B cell (primary cell): ENCODE measurements at regions of chr6 and their contacts with region 1.

Region 1: GRCh38 chr6:16761471-16762267 is 409 bp upstream of the ATXN1 start:
- DNase-seq: peak; percentile 85
- ATAC-seq: peak; percentile 52
- H3K4me3 ChIP-seq: peak overlapping the region; percentile 56 to 85 (median 80)
- H3K4me3 Mint-ChIP-seq: peak overlapping the region; percentile 91
- H3K27ac ChIP-seq: peak overlapping the region; percentile 79 to 89
- H3K27ac Mint-ChIP-seq: peak overlapping the region; percentile 93
- H3K4me1 ChIP-seq: peaks cover 13 to 29% of the 10 kb centered on the region in 2 donors
- H3K4me1 Mint-ChIP-seq: peaks cover 38% of the 10 kb centered on the region
- H3K27me3 ChIP-seq: peaks cover 0 to 23% (median 5%) of the 10 kb centered on the region in 4 experiments
- H3K27me3 Mint-ChIP-seq: no peaks in the 10 kb centered on the region
- CTCF ChIP-seq: peak; percentile 18

Region 2: DNA sequence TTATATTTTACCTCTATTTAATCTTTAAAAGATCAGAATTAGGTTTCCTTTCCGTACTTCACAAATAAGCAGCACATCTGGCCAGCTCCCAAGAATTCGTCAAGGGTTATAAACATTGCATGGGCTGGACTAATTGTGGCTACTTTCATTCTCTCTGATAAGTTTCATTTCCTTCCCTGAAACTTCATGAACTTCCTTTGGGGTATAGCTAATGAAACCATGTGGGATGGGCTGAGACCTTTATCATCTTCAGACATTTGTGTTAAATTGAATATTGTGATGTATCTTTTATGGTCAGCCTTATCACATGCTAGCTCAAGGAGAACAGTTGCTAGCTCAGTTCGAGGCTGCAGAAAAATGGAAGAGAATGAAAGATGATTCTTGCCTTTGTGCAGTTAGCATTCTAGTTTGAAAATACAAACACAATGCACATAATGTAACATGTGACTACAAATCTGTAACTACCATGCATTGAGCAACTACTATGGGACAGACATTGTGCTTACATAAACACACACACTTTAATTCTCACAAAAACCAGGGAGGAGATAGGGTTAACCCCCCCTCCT is 525.0 kb before region 1 on chr6:
- CTCF ChIA-PET with region 1: no interaction called
- POLR2A ChIA-PET with region 1: no interaction called
- intact Hi-C with region 1: loop called (anchors 2 kb)
- DNase-seq: peak; percentile 39
- ATAC-seq: peak; percentile 19
- H3K4me3 ChIP-seq: peak overlapping the region in 1 of 5 experiments; percentile 11
- H3K4me3 Mint-ChIP-seq: peak overlapping the region; percentile 95
- H3K27ac ChIP-seq: no peak overlapping the region
- H3K27ac Mint-ChIP-seq: no peak overlapping the region
- H3K4me1 ChIP-seq: peaks cover 27 to 34% of the 10 kb centered on the region in 2 donors
- H3K4me1 Mint-ChIP-seq: peaks cover 38% of the 10 kb centered on the region
- H3K27me3 ChIP-seq: peaks cover 0 to 21% (median 8%) of the 10 kb centered on the region in 4 experiments
- H3K27me3 Mint-ChIP-seq: peaks cover 37% of the 10 kb centered on the region
- CTCF ChIP-seq: no peak

Region 3: DNA sequence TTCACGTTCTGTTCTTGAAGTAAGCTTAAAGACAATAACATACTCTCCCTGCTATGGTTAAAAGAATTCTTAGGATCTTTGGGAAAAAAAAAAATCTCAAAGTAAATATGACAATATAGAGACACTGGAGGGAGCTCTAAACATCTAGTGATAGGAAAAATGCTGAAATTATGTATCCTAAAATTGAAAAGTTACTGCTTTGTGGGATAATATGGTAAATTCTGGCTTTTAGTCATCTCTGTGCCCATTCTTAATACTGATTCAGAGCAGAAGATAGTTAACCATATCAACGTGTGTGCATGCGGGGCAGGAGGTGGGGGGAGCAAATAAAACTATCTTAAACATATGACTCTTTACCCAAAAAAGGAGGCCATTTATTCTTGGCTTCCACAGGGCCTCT is 357.8 kb before region 1 on chr6:
- CTCF ChIA-PET with region 1: interaction called, 15 read pairs
- POLR2A ChIA-PET with region 1: no interaction called
- intact Hi-C with region 1: no loop called
- DNase-seq: no peak
- ATAC-seq: no peak
- H3K4me3 ChIP-seq: no peak overlapping the region
- H3K4me3 Mint-ChIP-seq: no peak overlapping the region
- H3K27ac ChIP-seq: no peak overlapping the region
- H3K27ac Mint-ChIP-seq: no peak overlapping the region
- H3K4me1 ChIP-seq: peaks cover 10 to 26% of the 10 kb centered on the region in 2 donors
- H3K4me1 Mint-ChIP-seq: peaks cover 38% of the 10 kb centered on the region
- H3K27me3 ChIP-seq: no peaks in the 10 kb centered on the region
- H3K27me3 Mint-ChIP-seq: no peaks in the 10 kb centered on the region
- CTCF ChIP-seq: no peak

Region 4: GRCh38 chr6:16420715-16421461 is 340.8 kb before region 1 on chr6:
- CTCF ChIA-PET with region 1: interaction called, 25 read pairs
- POLR2A ChIA-PET with region 1: interaction called, 9 read pairs
- intact Hi-C with region 1: no loop called
- DNase-seq: peak; percentile 85
- ATAC-seq: peak; percentile 65
- H3K4me3 ChIP-seq: peak overlapping the region in 1 of 5 experiments; percentile 31
- H3K4me3 Mint-ChIP-seq: peak overlapping the region; percentile 79
- H3K27ac ChIP-seq: peak overlapping the region; percentile 87 to 93
- H3K27ac Mint-ChIP-seq: peak overlapping the region; percentile 100
- H3K4me1 ChIP-seq: peaks cover 20 to 37% of the 10 kb centered on the region in 2 donors
- H3K4me1 Mint-ChIP-seq: peaks cover 47% of the 10 kb centered on the region
- H3K27me3 ChIP-seq: no peaks in the 10 kb centered on the region
- H3K27me3 Mint-ChIP-seq: no peaks in the 10 kb centered on the region
- CTCF ChIP-seq: no peak

Region 5: GRCh38 chr6:16514249-16514648 is 247.4 kb before region 1 on chr6:
- CTCF ChIA-PET with region 1: interaction called, 108 read pairs
- POLR2A ChIA-PET with region 1: no interaction called
- intact Hi-C with region 1: loop called (anchors 2 kb)
- DNase-seq: peak; percentile 42
- ATAC-seq: peak; percentile 47
- H3K4me3 ChIP-seq: no peak overlapping the region
- H3K4me3 Mint-ChIP-seq: no peak overlapping the region
- H3K27ac ChIP-seq: no peak overlapping the region
- H3K27ac Mint-ChIP-seq: peak overlapping the region; percentile 33
- H3K4me1 ChIP-seq: peaks cover 4 to 36% of the 10 kb centered on the region in 2 donors
- H3K4me1 Mint-ChIP-seq: peaks cover 42% of the 10 kb centered on the region
- H3K27me3 ChIP-seq: no peaks in the 10 kb centered on the region
- H3K27me3 Mint-ChIP-seq: no peaks in the 10 kb centered on the region
- CTCF ChIP-seq: peak; percentile 50

Region 6: GRCh38 chr6:16712931-16713484 is 48.7 kb before region 1 on chr6:
- CTCF ChIA-PET with region 1: interaction called, 6 read pairs
- POLR2A ChIA-PET with region 1: no interaction called
- intact Hi-C with region 1: loop called (anchors 5 kb)
- DNase-seq: peak; percentile 42
- ATAC-seq: peak; percentile 51
- H3K4me3 ChIP-seq: peak overlapping the region; percentile 0 to 55 (median 21)
- H3K4me3 Mint-ChIP-seq: peak overlapping the region; percentile 71
- H3K27ac ChIP-seq: no peak overlapping the region
- H3K27ac Mint-ChIP-seq: peak overlapping the region; percentile 78
- H3K4me1 ChIP-seq: peaks cover 7 to 16% of the 10 kb centered on the region in 2 donors
- H3K4me1 Mint-ChIP-seq: peaks cover 21% of the 10 kb centered on the region
- H3K27me3 ChIP-seq: no peaks in the 10 kb centered on the region
- H3K27me3 Mint-ChIP-seq: peaks cover 3% of the 10 kb centered on the region
- CTCF ChIP-seq: peak; percentile 55